ENCODE measurements at regions of chrX and their contacts with region 1.

Region 1: GRCh38 chrX:107627838-107628661 is at the start of gene PRPS1:
- DNase-seq: peak; percentile 91
- H3K4me3 Mint-ChIP-seq: peak within 1 kb of the TSS; percentile 94
- H3K27ac Mint-ChIP-seq: peak within 1 kb of the TSS; percentile 84
- H3K4me1 Mint-ChIP-seq: peaks cover 32% of the 10 kb centered on the region
- H3K27me3 Mint-ChIP-seq: peaks cover under 1% of the 10 kb centered on the region
- total RNA-seq, gene PRPS1: 67.4 to 70.2 TPM

Region 2: DNA sequence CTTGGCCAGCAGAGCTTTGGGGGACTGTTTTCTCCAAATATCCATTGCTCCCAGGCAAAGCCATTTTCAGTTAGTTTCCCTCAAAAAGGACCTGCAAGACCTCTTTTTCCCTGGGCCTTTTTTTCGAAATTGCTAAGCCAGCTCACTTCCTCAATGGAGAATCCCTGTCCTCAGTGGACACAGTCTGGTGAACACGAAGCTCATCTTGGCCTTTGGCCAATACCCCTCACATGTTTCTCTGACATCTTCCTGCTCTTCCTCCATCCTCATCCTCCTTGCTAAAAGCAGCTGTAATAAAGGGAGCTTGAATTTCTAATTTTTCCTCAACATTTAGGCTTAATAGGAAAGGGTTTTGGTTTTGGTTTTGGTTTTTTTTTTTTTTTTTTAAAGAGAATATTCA is 17.4 kb before region 1 on chrX:
- CTCF ChIA-PET with region 1: no interaction called
- POLR2A ChIA-PET with region 1: no interaction called
- DNase-seq: no peak
- H3K4me3 Mint-ChIP-seq: no peak overlapping the region
- H3K27ac Mint-ChIP-seq: no peak overlapping the region
- H3K4me1 Mint-ChIP-seq: no peaks in the 10 kb centered on the region
- H3K27me3 Mint-ChIP-seq: no peaks in the 10 kb centered on the region

Region 3: DNA sequence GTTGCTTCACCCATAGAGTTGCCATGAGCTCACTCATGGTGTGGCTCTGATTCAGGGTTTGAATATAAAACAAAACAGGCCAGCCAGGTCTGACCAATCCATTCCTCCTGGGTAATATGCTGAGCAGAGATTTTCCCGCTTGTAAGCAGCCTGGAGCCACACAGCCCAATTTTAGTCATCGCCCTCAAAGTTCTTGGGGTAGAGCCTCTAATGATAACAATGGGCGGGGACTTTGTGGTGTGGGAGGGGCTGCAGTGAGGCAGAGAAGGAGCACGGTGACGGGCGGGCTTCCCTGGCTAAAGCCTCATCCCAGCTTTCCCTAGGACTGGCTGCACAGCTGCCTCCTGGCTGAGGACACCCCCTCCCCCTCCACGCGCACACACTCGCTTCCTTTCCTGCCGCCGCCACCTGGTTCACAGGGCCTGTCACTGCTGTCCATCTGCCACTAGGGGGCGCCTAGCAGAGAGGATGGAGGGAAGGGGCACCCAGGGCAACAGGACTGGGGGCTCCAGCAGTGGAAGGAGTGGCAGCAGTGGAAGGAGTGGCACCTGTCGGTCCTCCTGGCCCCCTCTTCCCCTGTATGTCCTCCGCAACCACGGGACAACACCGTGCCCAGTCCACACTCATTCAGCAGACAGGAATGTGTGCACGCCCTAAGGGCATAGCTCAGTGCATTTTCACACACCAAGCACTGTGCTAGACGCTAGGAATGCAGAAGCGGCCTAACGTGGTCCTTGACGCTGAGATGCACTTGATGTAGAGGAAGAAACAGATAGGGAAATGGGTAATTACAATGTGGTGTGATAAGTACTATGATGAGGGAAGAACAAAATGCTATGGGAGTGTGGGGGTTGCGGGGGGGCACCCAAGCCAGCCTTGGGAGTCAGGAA is 27.1 kb after region 1 on chrX:
- CTCF ChIA-PET with region 1: interaction called, 14 read pairs
- POLR2A ChIA-PET with region 1: interaction called, 8 read pairs
- DNase-seq: peak; percentile 66
- H3K4me3 Mint-ChIP-seq: no peak overlapping the region
- H3K27ac Mint-ChIP-seq: no peak overlapping the region
- H3K4me1 Mint-ChIP-seq: peaks cover 13% of the 10 kb centered on the region
- H3K27me3 Mint-ChIP-seq: no peaks in the 10 kb centered on the region

Region 4: GRCh38 chrX:107678957-107679740 is 51.1 kb after region 1 on chrX:
- CTCF ChIA-PET with region 1: interaction called, 11 read pairs
- POLR2A ChIA-PET with region 1: interaction called, 10 read pairs
- DNase-seq: peak; percentile 85
- H3K4me3 Mint-ChIP-seq: no peak overlapping the region
- H3K27ac Mint-ChIP-seq: peak overlapping the region; percentile 93
- H3K4me1 Mint-ChIP-seq: peaks cover 66% of the 10 kb centered on the region
- H3K27me3 Mint-ChIP-seq: no peaks in the 10 kb centered on the region

Region 5: GRCh38 chrX:107716816-107717700 is 89.0 kb after region 1 on chrX:
- CTCF ChIA-PET with region 1: interaction called, 13 read pairs
- POLR2A ChIA-PET with region 1: interaction called, 37 read pairs
- DNase-seq: peak; percentile 91
- H3K4me3 Mint-ChIP-seq: peak overlapping the region; percentile 93
- H3K27ac Mint-ChIP-seq: peak overlapping the region; percentile 89
- H3K4me1 Mint-ChIP-seq: peaks cover 52% of the 10 kb centered on the region
- H3K27me3 Mint-ChIP-seq: no peaks in the 10 kb centered on the region

Region 6: GRCh38 chrX:107776649-107777535 is 148.8 kb after region 1 on chrX:
- CTCF ChIA-PET with region 1: interaction called, 16 read pairs
- POLR2A ChIA-PET with region 1: interaction called, 7 read pairs
- DNase-seq: peak; percentile 74
- H3K4me3 Mint-ChIP-seq: peak overlapping the region; percentile 81
- H3K27ac Mint-ChIP-seq: no peak overlapping the region
- H3K4me1 Mint-ChIP-seq: peaks cover 13% of the 10 kb centered on the region
- H3K27me3 Mint-ChIP-seq: peaks cover 6% of the 10 kb centered on the region